ENCODE measurements at regions of chr14 and their contacts with region 1.

Region 1: DNA sequence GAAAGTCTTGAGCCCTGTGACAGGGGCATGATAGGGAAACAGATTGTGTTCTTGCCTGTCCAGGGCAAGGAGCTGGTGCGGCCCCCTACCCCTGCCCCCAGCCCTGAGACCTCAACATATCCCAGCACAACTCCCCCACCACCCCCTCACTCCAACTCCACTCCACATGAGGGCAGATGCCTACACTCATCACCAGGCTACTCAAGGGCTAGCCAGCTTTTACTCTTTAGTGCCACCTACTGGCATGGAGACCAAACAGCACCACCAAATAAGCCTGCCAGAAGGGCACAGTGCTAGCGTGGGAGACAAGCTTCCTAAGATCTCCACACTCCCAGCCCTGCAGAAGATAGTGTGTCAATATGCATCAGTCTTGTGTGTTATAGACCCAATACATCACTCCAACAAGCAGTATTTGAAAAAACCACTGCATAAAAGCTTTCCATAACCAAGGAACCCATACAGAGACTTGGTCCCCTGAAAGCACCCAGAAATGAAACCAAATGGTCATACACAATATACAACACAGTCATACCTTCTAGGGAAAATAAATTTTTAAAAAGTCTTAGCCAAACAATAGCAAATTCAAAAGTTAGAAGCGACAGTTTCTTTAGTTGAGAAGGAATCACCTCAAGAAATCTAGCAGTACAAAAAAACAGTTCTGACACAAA is 154.4 kb downstream of the KCNK10 start:
- DNase-seq: peak; percentile 3 to 80 (median 46)
- ATAC-seq: peak; percentile 80 to 94 (median 88)
- H3K4me3 ChIP-seq: no peak overlapping the region
- H3K4me3 Mint-ChIP-seq: no peak overlapping the region
- H3K27ac ChIP-seq: no peak overlapping the region
- H3K27ac Mint-ChIP-seq: no peak overlapping the region
- H3K4me1 ChIP-seq: peaks cover 0 to 17% of the 10 kb centered on the region in 2 experiments
- H3K4me1 Mint-ChIP-seq: peaks cover 11 to 24% (median 13%) of the 10 kb centered on the region in 3 donors
- H3K27me3 ChIP-seq: peaks cover 0 to 10% of the 10 kb centered on the region in 2 experiments
- H3K27me3 Mint-ChIP-seq: peaks cover 9 to 21% of the 10 kb centered on the region in 2 donors

Region 2: DNA sequence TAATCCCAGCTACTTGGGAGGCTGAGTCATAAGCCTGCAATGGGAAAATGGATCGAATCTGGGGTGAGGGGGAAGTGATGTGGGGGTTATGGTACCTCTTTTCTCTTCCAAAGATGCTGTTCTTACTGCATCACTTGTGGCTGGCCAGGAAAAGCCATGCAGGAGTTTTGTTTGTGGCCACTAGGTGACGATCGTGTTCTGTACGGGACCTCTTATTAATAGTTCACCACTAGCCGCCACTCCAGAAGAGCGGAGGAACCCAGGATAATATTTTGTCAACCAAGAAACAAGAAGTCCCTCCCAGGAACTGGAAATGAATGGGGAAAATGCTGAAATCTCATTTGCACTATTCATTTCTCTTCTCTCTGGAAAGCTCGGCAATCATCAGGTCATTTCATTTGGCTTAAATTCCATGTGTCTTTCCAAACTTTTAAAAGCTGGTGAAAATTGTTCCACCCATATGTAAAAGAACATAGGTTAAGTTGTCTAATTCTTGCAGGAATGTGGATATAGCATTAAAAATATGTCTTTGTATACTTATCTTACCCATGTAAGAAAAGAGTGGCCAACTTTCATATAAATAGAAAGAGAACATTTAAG is 154.8 kb before region 1 on chr14:
- CTCF ChIA-PET with region 1: interaction called, 6 to 12 read pairs
- POLR2A ChIA-PET with region 1: no interaction called
- DNase-seq: peak in 22 of 35 experiments; percentile 11 to 65 (median 31)
- ATAC-seq: peak in 2 of 4 experiments; percentile 61
- H3K4me3 ChIP-seq: no peak overlapping the region
- H3K4me3 Mint-ChIP-seq: peak overlapping the region in 1 of 3 donors; percentile 28
- H3K27ac ChIP-seq: peak overlapping the region; percentile 27
- H3K27ac Mint-ChIP-seq: peak overlapping the region; percentile 45 to 57
- H3K4me1 ChIP-seq: peaks cover 21 to 32% of the 10 kb centered on the region in 2 experiments
- H3K4me1 Mint-ChIP-seq: peaks cover 49 to 81% (median 77%) of the 10 kb centered on the region in 3 donors
- H3K27me3 ChIP-seq: no peaks in the 10 kb centered on the region
- H3K27me3 Mint-ChIP-seq: no peaks in the 10 kb centered on the region

Region 3: GRCh38 chr14:88340357-88340756 is 171.7 kb after region 1 on chr14:
- CTCF ChIA-PET with region 1: no interaction called
- POLR2A ChIA-PET with region 1: no interaction called
- DNase-seq: no peak
- ATAC-seq: no peak
- H3K4me3 ChIP-seq: no peak overlapping the region
- H3K4me3 Mint-ChIP-seq: no peak overlapping the region
- H3K27ac ChIP-seq: no peak overlapping the region
- H3K27ac Mint-ChIP-seq: no peak overlapping the region
- H3K4me1 ChIP-seq: no peaks in the 10 kb centered on the region
- H3K4me1 Mint-ChIP-seq: no peaks in the 10 kb centered on the region
- H3K27me3 ChIP-seq: no peaks in the 10 kb centered on the region
- H3K27me3 Mint-ChIP-seq: peaks cover 19 to 26% of the 10 kb centered on the region in 2 donors

Region 4: DNA sequence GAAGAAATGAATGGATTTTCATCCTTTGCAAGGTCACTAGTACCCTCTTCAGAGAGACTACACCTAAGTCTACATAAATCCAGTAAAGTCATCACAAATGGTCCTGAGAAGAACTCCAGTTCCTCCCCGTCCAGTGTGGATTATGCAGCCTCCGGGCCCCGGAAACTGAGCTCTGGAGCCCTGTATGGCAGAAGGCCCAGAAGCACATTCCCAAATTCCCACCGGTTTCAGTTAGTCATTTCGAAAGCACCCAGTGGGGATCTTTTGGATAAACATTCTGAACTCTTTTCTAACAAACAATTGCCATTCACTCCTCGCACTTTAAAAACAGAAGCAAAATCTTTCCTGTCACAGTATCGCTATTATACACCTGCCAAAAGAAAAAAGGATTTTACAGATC is 257.6 kb after region 1 on chr14:
- CTCF ChIA-PET with region 1: no interaction called
- POLR2A ChIA-PET with region 1: no interaction called
- DNase-seq: no peak
- ATAC-seq: no peak
- H3K4me3 ChIP-seq: no peak overlapping the region
- H3K4me3 Mint-ChIP-seq: no peak overlapping the region
- H3K27ac ChIP-seq: no peak overlapping the region
- H3K27ac Mint-ChIP-seq: no peak overlapping the region
- H3K4me1 ChIP-seq: no peaks in the 10 kb centered on the region
- H3K4me1 Mint-ChIP-seq: no peaks in the 10 kb centered on the region
- H3K27me3 ChIP-seq: no peaks in the 10 kb centered on the region
- H3K27me3 Mint-ChIP-seq: no peaks in the 10 kb centered on the region

Measured in T-cell (primary cell).